CD8-positive, alpha-beta memory T cell (primary cell): ENCODE measurements at regions of chr20 and their contacts with region 1.

Region 1: DNA sequence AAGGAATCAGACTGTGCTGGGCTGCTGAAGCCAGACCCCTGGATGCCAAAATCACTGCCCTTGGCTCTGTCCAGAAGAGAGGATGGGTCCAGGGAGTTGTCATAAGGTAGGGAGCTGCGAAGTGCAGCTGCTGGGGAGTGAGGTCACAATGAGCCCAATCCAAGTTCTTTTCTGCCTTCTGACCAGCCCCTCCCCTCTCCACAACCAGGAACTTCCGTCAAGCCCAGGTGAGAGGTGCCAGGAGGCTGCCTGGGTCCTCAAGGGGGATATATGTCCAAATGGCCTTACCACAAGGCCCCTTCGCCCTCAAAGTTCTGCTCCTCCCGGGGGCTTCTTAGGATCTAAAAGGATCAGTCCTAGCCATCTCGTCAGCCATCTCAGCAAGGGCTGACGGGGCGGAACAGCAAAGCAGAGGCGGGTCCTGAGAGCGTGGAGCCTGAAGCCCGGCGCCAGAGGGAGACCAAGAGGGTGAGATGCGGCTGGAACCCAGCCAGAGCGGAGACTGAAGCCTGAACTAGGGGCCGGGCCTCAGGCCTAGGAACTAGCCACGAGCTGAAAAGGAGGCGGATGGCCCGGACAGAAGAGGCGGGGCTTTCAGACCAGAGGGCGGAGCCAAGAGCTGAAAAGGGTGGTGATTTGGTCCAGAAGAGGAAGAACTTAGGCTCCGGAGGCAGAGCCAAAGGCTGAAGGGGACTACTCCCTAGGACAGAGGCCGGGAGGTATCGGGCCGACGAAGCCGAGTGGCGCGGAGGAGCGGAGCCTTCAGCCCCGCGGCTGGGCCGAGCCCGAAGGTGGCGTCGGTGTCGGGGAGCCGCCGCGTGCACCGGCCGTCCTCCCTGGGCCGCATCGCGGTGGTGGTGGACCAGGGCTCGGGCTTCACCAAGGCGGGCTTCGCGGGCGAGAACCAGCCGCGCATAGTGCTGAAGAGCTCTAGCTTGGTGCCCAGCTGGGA is at the start of gene ACTL10:
- DNase-seq: peak; percentile 52 to 88 (median 72)
- H3K4me3 ChIP-seq: peak within 1 kb of the TSS; percentile 77
- H3K4me3 Mint-ChIP-seq: peak within 1 kb of the TSS; percentile 88 to 96 (median 94)
- H3K27ac ChIP-seq: peak within 1 kb of the TSS; percentile 43
- H3K27ac Mint-ChIP-seq: peak within 1 kb of the TSS; percentile 90 to 97 (median 94)
- H3K4me1 ChIP-seq: peaks cover 33% of the 10 kb centered on the region
- H3K4me1 Mint-ChIP-seq: peaks cover 34 to 54% (median 37%) of the 10 kb centered on the region in 3 donors
- H3K27me3 ChIP-seq: no peaks in the 10 kb centered on the region
- H3K27me3 Mint-ChIP-seq: no peaks in the 10 kb centered on the region
- total RNA-seq, gene ACTL10: 3.8 to 4.6 TPM

Region 2: GRCh38 chr20:33401184-33401920 is 265.2 kb before region 1 on chr20 and contains the start of gene CDK5RAP1:
- CTCF ChIA-PET with region 1: interaction called, 17 read pairs
- POLR2A ChIA-PET with region 1: no interaction called
- DNase-seq: peak; percentile 73 to 90 (median 79)
- H3K4me3 ChIP-seq: peak within 1 kb of the TSS; percentile 76
- H3K4me3 Mint-ChIP-seq: peak within 1 kb of the TSS; percentile 90 to 97 (median 95)
- H3K27ac ChIP-seq: peak within 1 kb of the TSS; percentile 73
- H3K27ac Mint-ChIP-seq: peak within 1 kb of the TSS; percentile 58 to 96 (median 92)
- H3K4me1 ChIP-seq: peaks cover 25% of the 10 kb centered on the region
- H3K4me1 Mint-ChIP-seq: peaks cover 54 to 68% (median 65%) of the 10 kb centered on the region in 3 donors
- H3K27me3 ChIP-seq: no peaks in the 10 kb centered on the region
- H3K27me3 Mint-ChIP-seq: no peaks in the 10 kb centered on the region
- total RNA-seq, gene CDK5RAP1: 41.6 to 46.4 TPM

Region 3: DNA sequence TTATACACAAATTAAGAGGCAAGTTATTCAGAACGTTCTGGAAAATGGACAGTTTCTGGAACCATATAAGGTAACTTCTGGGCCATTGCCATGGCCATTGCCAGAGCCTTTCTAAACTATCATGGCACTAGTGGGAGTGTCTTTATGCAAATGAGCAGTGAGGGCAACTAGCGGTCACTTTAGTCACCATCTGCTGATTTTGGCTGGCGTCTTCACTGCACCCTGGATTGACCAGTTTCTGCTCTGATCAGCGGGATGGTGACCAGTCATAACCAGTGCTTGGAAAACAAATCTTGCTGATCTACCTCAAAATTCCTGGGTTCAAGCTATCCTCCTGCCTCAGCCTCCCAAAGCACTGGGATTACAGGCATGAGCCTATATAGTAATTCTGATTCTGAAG is 215.7 kb before region 1 on chr20:
- CTCF ChIA-PET with region 1: interaction called, 34 read pairs
- POLR2A ChIA-PET with region 1: no interaction called
- DNase-seq: no peak
- H3K4me3 ChIP-seq: no peak overlapping the region
- H3K4me3 Mint-ChIP-seq: no peak overlapping the region
- H3K27ac ChIP-seq: no peak overlapping the region
- H3K27ac Mint-ChIP-seq: no peak overlapping the region
- H3K4me1 ChIP-seq: no peaks in the 10 kb centered on the region
- H3K4me1 Mint-ChIP-seq: no peaks in the 10 kb centered on the region
- H3K27me3 ChIP-seq: no peaks in the 10 kb centered on the region
- H3K27me3 Mint-ChIP-seq: peaks cover 0 to 3% of the 10 kb centered on the region in 2 donors

Region 4: GRCh38 chr20:33489495-33490022 is 177.0 kb before region 1 on chr20:
- CTCF ChIA-PET with region 1: interaction called, 33 read pairs
- POLR2A ChIA-PET with region 1: interaction called, 18 read pairs
- DNase-seq: peak; percentile 99
- H3K4me3 ChIP-seq: peak overlapping the region; percentile 68
- H3K4me3 Mint-ChIP-seq: peak overlapping the region; percentile 83 to 95 (median 91)
- H3K27ac ChIP-seq: peak overlapping the region; percentile 88
- H3K27ac Mint-ChIP-seq: peak overlapping the region; percentile 91 to 97 (median 94)
- H3K4me1 ChIP-seq: peaks cover 10% of the 10 kb centered on the region
- H3K4me1 Mint-ChIP-seq: peaks cover 13 to 34% (median 19%) of the 10 kb centered on the region in 3 donors
- H3K27me3 ChIP-seq: no peaks in the 10 kb centered on the region
- H3K27me3 Mint-ChIP-seq: peaks cover 0 to 2% of the 10 kb centered on the region in 2 donors

Region 5: GRCh38 chr20:33594743-33595142 is 71.8 kb before region 1 on chr20:
- CTCF ChIA-PET with region 1: no interaction called
- POLR2A ChIA-PET with region 1: no interaction called
- DNase-seq: no peak
- H3K4me3 ChIP-seq: no peak overlapping the region
- H3K4me3 Mint-ChIP-seq: no peak overlapping the region
- H3K27ac ChIP-seq: no peak overlapping the region
- H3K27ac Mint-ChIP-seq: no peak overlapping the region
- H3K4me1 ChIP-seq: no peaks in the 10 kb centered on the region
- H3K4me1 Mint-ChIP-seq: peaks cover 12 to 29% (median 19%) of the 10 kb centered on the region in 3 donors
- H3K27me3 ChIP-seq: no peaks in the 10 kb centered on the region
- H3K27me3 Mint-ChIP-seq: no peaks in the 10 kb centered on the region

Region 6: DNA sequence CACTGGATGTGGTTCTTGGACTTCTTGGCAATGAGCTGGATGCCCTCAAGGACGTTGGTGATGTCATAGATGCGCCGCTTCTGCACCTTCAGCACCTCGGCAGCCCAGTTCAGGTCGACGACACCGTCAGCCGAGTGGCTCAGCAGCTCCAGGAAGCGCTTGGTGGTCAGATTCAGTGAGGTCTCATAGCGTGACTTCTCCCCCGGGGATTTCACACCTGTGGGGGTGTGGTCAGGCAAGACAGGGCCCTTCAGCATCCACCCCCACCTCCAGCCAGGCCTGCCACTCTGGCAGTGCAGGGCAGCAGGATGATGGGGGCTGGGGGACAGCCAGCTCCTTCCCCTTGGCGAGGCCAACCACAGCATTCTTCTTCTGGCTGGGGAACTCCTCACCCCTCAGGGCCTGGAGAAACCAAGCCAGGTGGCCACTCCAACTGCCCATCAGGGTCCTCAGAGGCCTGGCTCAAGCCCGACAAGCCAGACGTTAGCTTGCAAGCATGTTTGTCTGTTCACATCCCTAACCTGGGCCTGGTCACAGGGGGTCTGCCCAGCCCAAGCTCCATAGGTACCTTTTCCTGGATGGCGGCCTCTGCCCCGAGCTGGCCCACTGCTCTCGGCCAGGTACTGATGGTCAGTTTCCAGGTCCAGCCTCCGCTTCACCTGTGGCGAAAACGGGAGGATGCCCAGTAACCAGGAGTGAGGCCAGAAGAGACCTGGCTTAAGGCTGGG is 13.4 kb after region 1 on chr20:
- CTCF ChIA-PET with region 1: interaction called, 103 read pairs
- POLR2A ChIA-PET with region 1: interaction called, 24 read pairs
- DNase-seq: peak in 4 of 5 donors; percentile 23 to 76 (median 35)
- H3K4me3 ChIP-seq: no peak overlapping the region
- H3K4me3 Mint-ChIP-seq: peak overlapping the region; percentile 3 to 57 (median 41)
- H3K27ac ChIP-seq: no peak overlapping the region
- H3K27ac Mint-ChIP-seq: peak overlapping the region; percentile 26 to 83 (median 68)
- H3K4me1 ChIP-seq: peaks cover 39% of the 10 kb centered on the region
- H3K4me1 Mint-ChIP-seq: peaks cover 28 to 49% (median 47%) of the 10 kb centered on the region in 3 donors
- H3K27me3 ChIP-seq: no peaks in the 10 kb centered on the region
- H3K27me3 Mint-ChIP-seq: no peaks in the 10 kb centered on the region

Region 7: GRCh38 chr20:33731693-33732165 is 65.2 kb after region 1 on chr20 and contains the start of gene ZNF341:
- CTCF ChIA-PET with region 1: interaction called, 12 read pairs
- POLR2A ChIA-PET with region 1: interaction called, 7 read pairs
- DNase-seq: peak; percentile 80 to 92 (median 88)
- H3K4me3 ChIP-seq: peak within 1 kb of the TSS; percentile 61
- H3K4me3 Mint-ChIP-seq: peak within 1 kb of the TSS; percentile 89 to 93 (median 90)
- H3K27ac ChIP-seq: peak within 1 kb of the TSS; percentile 60
- H3K27ac Mint-ChIP-seq: peak within 1 kb of the TSS; percentile 90 to 98 (median 96)
- H3K4me1 ChIP-seq: peaks cover 16% of the 10 kb centered on the region
- H3K4me1 Mint-ChIP-seq: peaks cover 24 to 28% (median 25%) of the 10 kb centered on the region in 3 donors
- H3K27me3 ChIP-seq: no peaks in the 10 kb centered on the region
- H3K27me3 Mint-ChIP-seq: peaks cover 0 to 2% of the 10 kb centered on the region in 2 donors
- total RNA-seq, gene ZNF341: 4.5 to 5.0 TPM

Region 8: DNA sequence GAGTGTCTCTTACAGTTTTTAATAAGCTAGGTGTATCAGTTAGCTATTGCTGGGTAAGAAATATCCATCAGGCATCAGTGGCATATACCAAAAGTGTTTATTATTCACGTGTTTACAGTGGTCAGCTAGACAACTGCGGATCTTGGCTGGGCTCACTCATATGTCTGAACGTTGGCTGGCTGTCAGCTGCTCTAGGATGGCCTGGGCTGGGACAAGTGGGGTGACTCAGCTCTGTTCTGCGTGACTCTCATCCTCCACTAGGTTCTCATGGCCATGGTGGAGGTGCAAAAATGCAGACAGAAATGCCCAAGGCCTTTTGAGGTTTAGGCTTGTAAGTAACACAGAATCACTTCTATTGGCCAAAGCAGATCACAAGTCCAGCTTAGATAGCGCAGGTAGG is 87.2 kb after region 1 on chr20:
- CTCF ChIA-PET with region 1: no interaction called
- POLR2A ChIA-PET with region 1: no interaction called
- DNase-seq: no peak
- H3K4me3 ChIP-seq: no peak overlapping the region
- H3K4me3 Mint-ChIP-seq: no peak overlapping the region
- H3K27ac ChIP-seq: no peak overlapping the region
- H3K27ac Mint-ChIP-seq: peak overlapping the region in 1 of 8 donors; percentile 37
- H3K4me1 ChIP-seq: no peaks in the 10 kb centered on the region
- H3K4me1 Mint-ChIP-seq: peaks cover 2 to 7% (median 6%) of the 10 kb centered on the region in 3 donors
- H3K27me3 ChIP-seq: no peaks in the 10 kb centered on the region
- H3K27me3 Mint-ChIP-seq: no peaks in the 10 kb centered on the region